ENCODE measurements at regions of chr1 and their contacts with region 1.

Region 1: DNA sequence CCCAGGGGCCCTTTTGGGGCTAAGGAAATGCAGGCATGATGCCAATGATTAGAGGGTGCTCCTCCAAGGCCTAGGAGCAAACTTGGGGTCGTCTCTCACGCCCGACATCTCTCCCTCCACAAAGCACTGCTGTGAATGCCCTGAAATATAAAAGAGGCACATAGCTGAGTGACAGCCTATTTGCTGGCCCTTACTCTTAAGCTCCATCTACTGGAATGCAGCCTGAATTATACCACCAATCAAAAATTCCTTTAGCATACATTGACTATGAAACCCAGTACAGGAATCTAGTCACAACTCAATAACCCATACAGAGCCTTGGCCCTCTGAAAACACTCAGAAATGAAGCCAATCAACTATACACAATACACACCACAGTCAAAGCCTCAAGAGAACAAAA is 105.5 kb downstream of the LRIG2 start:
- DNase-seq: no peak
- ATAC-seq: peak; percentile 65
- H3K4me3 ChIP-seq: no peak overlapping the region
- H3K27ac ChIP-seq: no peak overlapping the region
- H3K4me1 ChIP-seq: no peaks in the 10 kb centered on the region
- H3K27me3 ChIP-seq: no peaks in the 10 kb centered on the region
- CTCF ChIP-seq: peak; percentile 41
- EP300 ChIP-seq: no peak
- POLR2A ChIP-seq: no peak
- RAD21 ChIP-seq: no peak

Region 2: GRCh38 chr1:113109908-113110554 is 68.5 kb before region 1 on chr1:
- CTCF ChIA-PET with region 1: no interaction called
- POLR2A ChIA-PET with region 1: no interaction called
- in situ Hi-C with region 1: no loop called
- intact Hi-C with region 1: no loop called
- DNase-seq: no peak
- ATAC-seq: no peak
- H3K4me3 ChIP-seq: no peak overlapping the region
- H3K27ac ChIP-seq: no peak overlapping the region
- H3K4me1 ChIP-seq: no peaks in the 10 kb centered on the region
- H3K27me3 ChIP-seq: no peaks in the 10 kb centered on the region
- CTCF ChIP-seq: no peak
- EP300 ChIP-seq: no peak
- POLR2A ChIP-seq: no peak
- RAD21 ChIP-seq: no peak

Region 3: GRCh38 chr1:113140588-113141446 is 37.7 kb before region 1 on chr1:
- CTCF ChIA-PET with region 1: no interaction called
- POLR2A ChIA-PET with region 1: no interaction called
- in situ Hi-C with region 1: no loop called
- intact Hi-C with region 1: loop called (anchors 2 kb)
- DNase-seq: peak; percentile 68
- ATAC-seq: peak; percentile 94
- H3K4me3 ChIP-seq: peak overlapping the region; percentile 55 to 78 (median 56)
- H3K27ac ChIP-seq: peak overlapping the region; percentile 16
- H3K4me1 ChIP-seq: peaks cover 19% of the 10 kb centered on the region
- H3K27me3 ChIP-seq: no peaks in the 10 kb centered on the region
- CTCF ChIP-seq: peak; percentile 93
- EP300 ChIP-seq: no peak
- POLR2A ChIP-seq: no peak
- RAD21 ChIP-seq: peak; percentile 91